Aorta (tissue), 5 donors: ENCODE measurements at regions of chr17 and their contacts with region 1.

Region 1: DNA sequence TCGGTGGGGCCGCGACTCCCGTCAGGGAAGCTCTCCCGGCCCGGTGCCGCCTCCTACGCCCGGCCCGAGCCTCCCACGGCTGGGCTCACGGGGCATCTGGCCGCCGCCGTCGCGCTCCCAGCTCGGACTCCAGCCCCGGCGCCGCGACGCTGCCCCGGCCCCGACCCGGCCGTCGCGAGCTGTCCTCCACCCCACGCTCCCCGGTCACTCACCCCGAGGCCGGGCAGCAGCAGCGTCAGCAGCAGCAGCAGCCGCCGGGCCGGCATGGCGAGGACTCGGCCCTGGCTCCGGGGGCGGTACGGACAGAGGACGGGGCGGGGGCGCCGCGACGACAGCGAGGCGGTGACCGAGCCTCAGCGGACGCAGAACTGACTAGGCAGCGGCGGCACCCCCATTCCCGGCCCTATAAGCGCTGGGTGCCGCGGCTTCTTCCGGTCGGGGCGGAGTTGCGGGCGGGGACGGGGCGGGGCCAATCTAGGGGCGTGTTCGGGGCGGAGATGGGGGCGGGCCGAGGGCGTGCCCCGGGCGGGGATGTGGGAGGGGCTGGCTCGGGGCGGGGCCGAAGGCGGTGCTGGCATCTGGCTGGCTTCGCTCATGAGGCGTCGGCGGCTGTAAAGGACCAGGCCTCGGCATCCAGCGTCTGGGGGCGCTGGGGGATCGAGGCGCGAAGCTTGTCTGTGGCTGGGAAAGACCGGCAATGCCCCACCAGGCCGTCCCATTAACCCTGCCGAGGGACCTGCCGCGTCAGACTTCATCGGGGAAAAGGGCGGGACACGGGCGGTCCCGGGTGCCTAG is at the start of gene ERN1:
- DNase-seq: peak; percentile 96 to 98
- ATAC-seq: peak; percentile 98
- H3K4me3 ChIP-seq: peak within 1 kb of the TSS; percentile 46 to 92
- H3K27ac ChIP-seq: peak within 1 kb of the TSS; percentile 91 to 98
- H3K4me1 ChIP-seq: no peaks in the 10 kb centered on the region
- H3K27me3 ChIP-seq: peaks cover 0 to 1% of the 10 kb centered on the region in 2 donors
- total RNA-seq, gene ERN1: 17.8 to 31.0 TPM

Region 2: GRCh38 chr17:63848834-63849700 is 280.9 kb before region 1 on chr17:
- intact Hi-C with region 1: loop called in 1 of 2 experiments (anchors 5 kb)
- DNase-seq: peak; percentile 96 to 98
- ATAC-seq: peak; percentile 96
- H3K4me3 ChIP-seq: no peak overlapping the region
- H3K27ac ChIP-seq: no peak overlapping the region
- H3K4me1 ChIP-seq: no peaks in the 10 kb centered on the region
- H3K27me3 ChIP-seq: no peaks in the 10 kb centered on the region

Region 3: GRCh38 chr17:63919311-63919723 is 210.6 kb before region 1 on chr17:
- intact Hi-C with region 1: loop called (anchors 5 kb)
- DNase-seq: peak; percentile 68 to 77
- ATAC-seq: peak; percentile 80
- H3K4me3 ChIP-seq: no peak overlapping the region
- H3K27ac ChIP-seq: no peak overlapping the region
- H3K4me1 ChIP-seq: no peaks in the 10 kb centered on the region
- H3K27me3 ChIP-seq: no peaks in the 10 kb centered on the region

Region 4: GRCh38 chr17:64025732-64026294 is 104.1 kb before region 1 on chr17:
- intact Hi-C with region 1: loop called (anchors 2 to 5 kb)
- DNase-seq: peak; percentile 87 to 91
- ATAC-seq: peak; percentile 86
- H3K4me3 ChIP-seq: no peak overlapping the region
- H3K27ac ChIP-seq: no peak overlapping the region
- H3K4me1 ChIP-seq: no peaks in the 10 kb centered on the region
- H3K27me3 ChIP-seq: no peaks in the 10 kb centered on the region

Region 5: GRCh38 chr17:64063766-64064224 is 66.2 kb before region 1 on chr17:
- intact Hi-C with region 1: loop called (anchors 5 kb)
- DNase-seq: peak in 1 of 2 donors; percentile 87
- ATAC-seq: peak; percentile 74
- H3K4me3 ChIP-seq: no peak overlapping the region
- H3K27ac ChIP-seq: no peak overlapping the region
- H3K4me1 ChIP-seq: no peaks in the 10 kb centered on the region
- H3K27me3 ChIP-seq: no peaks in the 10 kb centered on the region

Region 6: GRCh38 chr17:64183815-64184214 is 53.9 kb after region 1 on chr17:
- intact Hi-C with region 1: no loop called
- DNase-seq: no peak
- ATAC-seq: no peak
- H3K4me3 ChIP-seq: no peak overlapping the region
- H3K27ac ChIP-seq: no peak overlapping the region
- H3K4me1 ChIP-seq: peaks cover 0 to 7% of the 10 kb centered on the region in 2 donors
- H3K27me3 ChIP-seq: no peaks in the 10 kb centered on the region

Region 7: GRCh38 chr17:64236853-64237277 is 106.9 kb after region 1 on chr17:
- intact Hi-C with region 1: no loop called
- DNase-seq: no peak
- ATAC-seq: no peak
- H3K4me3 ChIP-seq: no peak overlapping the region
- H3K27ac ChIP-seq: no peak overlapping the region
- H3K4me1 ChIP-seq: no peaks in the 10 kb centered on the region
- H3K27me3 ChIP-seq: no peaks in the 10 kb centered on the region